ENCODE measurements at regions of chr1 and their contacts with region 1.

Region 1: DNA sequence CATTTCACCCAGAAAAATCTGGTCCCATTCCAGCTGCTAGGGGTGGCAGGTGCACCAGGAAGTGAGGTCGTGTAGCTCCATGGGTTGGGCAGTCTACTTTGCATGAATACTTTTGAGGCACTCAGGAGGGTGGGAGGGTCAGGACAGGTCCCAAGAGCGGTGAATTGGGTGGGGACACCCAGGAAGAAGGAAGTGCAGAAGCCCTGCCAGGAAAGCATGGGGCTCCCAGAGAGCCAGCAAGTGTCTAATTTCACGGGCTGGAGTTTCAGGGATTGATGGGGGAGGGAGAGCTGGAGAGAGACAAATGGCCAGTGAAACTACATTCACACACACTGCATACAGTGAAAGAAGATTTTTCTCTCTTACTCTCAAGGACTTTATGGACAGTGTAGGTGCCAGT is 137.8 kb downstream of the GALNT2 start:
- DNase-seq: no peak
- H3K4me3 ChIP-seq: no peak overlapping the region
- H3K27ac ChIP-seq: no peak overlapping the region
- H3K4me1 ChIP-seq: peaks cover 0 to 3% (median 1%) of the 10 kb centered on the region in 4 experiments; a peak in 2 of 7 replicates
- H3K27me3 ChIP-seq: no peaks in the 10 kb centered on the region
- CTCF ChIP-seq: no peak
- EP300 ChIP-seq: no peak
- POLR2A ChIP-seq: no peak
- RAD21 ChIP-seq: no peak

Region 2: GRCh38 chr1:230215031-230215430 is 10.2 kb after region 1 on chr1:
- CTCF ChIA-PET with region 1: interaction called, 17 read pairs
- POLR2A ChIA-PET with region 1: no interaction called
- DNase-seq: no peak
- H3K4me3 ChIP-seq: no peak overlapping the region
- H3K27ac ChIP-seq: no peak overlapping the region
- H3K4me1 ChIP-seq: no peaks in the 10 kb centered on the region; a peak in 1 of 7 replicates
- H3K27me3 ChIP-seq: no peaks in the 10 kb centered on the region
- CTCF ChIP-seq: peak; percentile 29 to 60 (median 39)
- EP300 ChIP-seq: no peak
- POLR2A ChIP-seq: no peak
- RAD21 ChIP-seq: peak; percentile 72 to 75

Region 3: DNA sequence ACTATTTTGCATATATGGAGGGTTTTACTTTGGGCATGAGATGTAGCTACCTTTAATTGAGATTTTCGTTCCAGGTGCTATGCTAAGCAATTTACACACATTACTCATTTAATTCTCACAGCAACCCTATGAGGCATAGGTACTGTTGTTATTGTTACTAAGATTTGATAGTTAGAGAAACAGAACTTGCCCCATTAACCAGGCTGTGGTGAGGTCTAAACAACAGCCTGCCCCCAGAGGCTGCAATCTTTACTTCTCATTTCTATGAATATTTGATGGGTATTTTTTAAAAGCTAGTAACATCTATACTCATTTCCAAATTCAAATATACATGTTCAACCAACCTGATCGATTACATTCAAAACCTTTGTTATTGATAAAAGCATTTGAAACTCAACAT is 17.8 kb after region 1 on chr1:
- CTCF ChIA-PET with region 1: interaction called, 17 read pairs
- POLR2A ChIA-PET with region 1: no interaction called
- DNase-seq: no peak
- H3K4me3 ChIP-seq: no peak overlapping the region
- H3K27ac ChIP-seq: no peak overlapping the region
- H3K4me1 ChIP-seq: peaks cover 0 to 3% (median 1%) of the 10 kb centered on the region in 4 experiments; a peak in 5 of 7 replicates
- H3K27me3 ChIP-seq: no peaks in the 10 kb centered on the region
- CTCF ChIP-seq: no peak
- EP300 ChIP-seq: no peak
- POLR2A ChIP-seq: no peak
- RAD21 ChIP-seq: no peak

Measured in H1 (cell line).